Breast epithelium (tissue), 4 donors: ENCODE measurements at regions of chr3 and their contacts with region 1.

Region 1: DNA sequence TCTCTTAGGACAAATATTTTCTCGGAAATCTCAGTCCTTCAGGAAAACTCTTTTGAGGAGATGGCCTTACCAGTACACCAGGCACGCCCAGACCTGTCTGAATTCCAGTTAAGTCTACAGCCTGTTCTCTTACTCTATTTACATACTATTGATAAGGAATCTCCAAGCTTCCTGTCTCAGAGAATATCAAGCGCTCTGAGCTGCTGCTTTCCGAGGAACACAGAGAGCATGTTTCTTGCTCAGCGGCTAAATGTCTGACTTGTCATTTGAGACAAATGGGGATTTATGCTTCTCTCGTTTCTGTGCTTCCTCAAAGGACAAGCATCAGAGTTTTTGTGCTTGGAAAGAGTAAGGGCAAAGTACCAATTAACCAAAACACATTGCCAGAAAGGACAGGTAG is 112.4 kb upstream of the CCDC54 start:
- DNase-seq: no peak
- H3K4me3 ChIP-seq: no peak overlapping the region
- H3K27ac ChIP-seq: no peak overlapping the region
- H3K4me1 ChIP-seq: no peaks in the 10 kb centered on the region
- H3K27me3 ChIP-seq: no peaks in the 10 kb centered on the region
- CTCF ChIP-seq: no peak
- POLR2A ChIP-seq: no peak

Region 2: GRCh38 chr3:107421170-107421792 is 156.4 kb after region 1 on chr3:
- intact Hi-C with region 1: loop called (anchors 5 kb)
- DNase-seq: no peak
- H3K4me3 ChIP-seq: peak overlapping the region in 2 of 3 donors; percentile 32 to 37
- H3K27ac ChIP-seq: no peak overlapping the region
- H3K4me1 ChIP-seq: no peaks in the 10 kb centered on the region
- H3K27me3 ChIP-seq: no peaks in the 10 kb centered on the region
- CTCF ChIP-seq: peak; percentile 52 to 65 (median 54)
- POLR2A ChIP-seq: no peak